ENCODE measurements at regions of chr21 and their contacts with region 1.

Region 1: DNA sequence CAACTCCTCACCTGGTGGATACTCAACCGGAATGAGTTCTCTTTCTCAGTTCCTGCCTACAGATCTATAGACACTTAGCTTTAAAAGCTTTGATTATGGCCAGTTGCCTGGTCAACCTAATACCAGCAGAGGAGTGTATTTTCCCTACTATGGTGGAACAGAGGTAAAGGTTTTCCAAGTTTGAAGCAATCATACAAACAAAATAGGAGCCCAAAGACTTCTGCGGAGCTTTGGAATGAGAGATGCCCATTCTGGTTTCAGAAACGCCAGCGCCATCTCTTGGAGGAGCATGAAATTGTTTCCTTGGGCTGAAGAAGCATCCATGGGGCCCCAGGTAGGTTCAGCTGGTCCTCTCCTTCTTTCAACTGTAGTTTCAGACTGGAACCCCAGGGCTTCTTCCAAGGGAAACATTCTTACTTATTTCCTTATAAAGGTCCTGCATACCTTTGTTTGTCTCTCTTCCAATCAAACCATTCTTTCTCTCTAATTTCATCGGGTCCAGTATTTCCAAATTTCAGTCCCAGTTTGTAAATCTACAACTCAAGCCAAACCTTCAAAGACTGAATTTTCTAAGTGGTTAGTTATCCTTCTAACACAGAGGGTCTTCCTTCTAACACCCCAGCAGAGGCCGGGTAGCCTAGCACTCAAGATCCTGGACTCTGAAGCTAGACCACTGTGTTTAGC is 95.9 kb downstream of the KCNJ15 start:
- DNase-seq: no peak
- H3K4me3 ChIP-seq: no peak overlapping the region
- H3K27ac ChIP-seq: peak overlapping the region in 5 of 8 donors; percentile 14 to 67 (median 62)
- H3K4me1 ChIP-seq: peaks cover 5 to 37% (median 18%) of the 10 kb centered on the region in 6 donors
- H3K27me3 ChIP-seq: peaks cover 0 to 12% (median 0%) of the 10 kb centered on the region in 7 donors
- CTCF ChIP-seq: peak; percentile 34 to 74 (median 53)
- POLR2A ChIP-seq: no peak

Region 2: GRCh38 chr21:38170280-38170679 is 182.4 kb before region 1 on chr21:
- intact Hi-C with region 1: loop called (anchors 2 kb)
- DNase-seq: no peak
- H3K4me3 ChIP-seq: no peak overlapping the region
- H3K27ac ChIP-seq: peak overlapping the region in 6 of 8 donors; percentile 34 to 74 (median 52)
- H3K4me1 ChIP-seq: peaks cover 0 to 18% (median 2%) of the 10 kb centered on the region in 6 donors
- H3K27me3 ChIP-seq: no peaks in the 10 kb centered on the region
- CTCF ChIP-seq: peak in 7 of 11 experiments; percentile 14 to 54 (median 34)
- POLR2A ChIP-seq: no peak

Region 3: DNA sequence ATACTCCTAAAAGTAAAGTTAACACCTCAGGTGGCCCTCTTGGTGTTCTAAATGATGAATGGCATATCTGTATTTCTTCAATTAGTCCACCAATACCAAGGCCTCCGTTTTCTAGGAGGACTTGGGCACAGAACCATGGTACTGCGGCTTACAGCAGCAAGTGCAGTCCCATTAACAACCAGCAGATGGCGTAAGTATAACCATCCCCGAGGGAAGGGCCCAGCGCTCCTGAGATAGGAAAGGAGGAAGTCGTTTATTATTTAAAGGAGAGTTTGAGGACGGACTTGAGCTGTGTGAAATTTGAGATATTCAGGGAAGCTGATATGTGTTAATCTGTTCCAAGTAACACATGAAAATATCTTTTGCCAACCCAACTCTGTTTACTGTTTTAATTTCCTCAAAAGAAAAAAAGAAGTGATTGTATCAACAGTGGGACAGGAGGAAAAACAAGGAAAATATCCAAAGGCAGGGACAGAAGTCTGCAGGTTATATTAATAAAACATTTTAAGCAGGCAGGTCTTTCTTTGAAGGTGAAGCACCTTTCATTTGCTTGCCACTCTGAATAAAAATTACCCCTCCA is 133.5 kb before region 1 on chr21:
- intact Hi-C with region 1: loop called (anchors 5 kb)
- DNase-seq: peak; percentile 85
- H3K4me3 ChIP-seq: peak overlapping the region in 1 of 8 donors; percentile 22
- H3K27ac ChIP-seq: peak overlapping the region in 7 of 8 donors; percentile 21 to 82 (median 69)
- H3K4me1 ChIP-seq: peaks cover 0 to 16% (median 6%) of the 10 kb centered on the region in 6 donors
- H3K27me3 ChIP-seq: no peaks in the 10 kb centered on the region
- CTCF ChIP-seq: peak; percentile 85 to 97 (median 93)
- POLR2A ChIP-seq: no peak

Region 4: DNA sequence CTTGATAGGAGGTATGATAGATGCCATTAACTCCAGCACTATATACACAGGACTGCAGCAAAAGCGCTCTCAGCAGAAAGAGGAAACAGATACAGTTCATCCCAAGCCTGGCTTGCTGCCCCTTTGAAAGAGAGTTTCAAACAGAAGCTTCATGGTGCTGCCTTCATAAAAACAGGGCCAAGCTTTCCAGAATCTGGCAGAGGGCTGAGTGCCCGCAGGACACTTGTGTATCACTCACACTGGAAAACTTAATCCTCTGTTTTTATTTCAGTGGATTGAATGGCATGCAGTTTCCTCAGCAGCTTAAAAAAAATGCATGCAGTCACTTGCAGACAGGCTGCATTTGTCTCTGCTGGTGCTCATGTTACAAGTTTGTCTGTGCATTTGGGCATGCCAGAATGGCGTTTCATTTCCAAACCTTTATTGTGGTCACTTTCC is 55.5 kb before region 1 on chr21:
- intact Hi-C with region 1: no loop called
- DNase-seq: no peak
- H3K4me3 ChIP-seq: peak overlapping the region in 1 of 8 donors; percentile 37
- H3K27ac ChIP-seq: peak overlapping the region in 7 of 8 donors; percentile 65 to 87 (median 81)
- H3K4me1 ChIP-seq: peaks cover 5 to 59% (median 24%) of the 10 kb centered on the region in 6 donors
- H3K27me3 ChIP-seq: peaks cover 0 to 6% (median 0%) of the 10 kb centered on the region in 7 donors
- CTCF ChIP-seq: no peak
- POLR2A ChIP-seq: no peak

Measured in spleen (tissue), 13 donors.